Pancreas (tissue), 10 donors: ENCODE measurements at regions of chr11 and their contacts with region 1.

Region 1: GRCh38 chr11:58675334-58676155 is 53.1 kb downstream of the CNTF start:
- DNase-seq: peak; percentile 74 to 95 (median 86)
- ATAC-seq: peak; percentile 91 to 95 (median 94)
- H3K4me3 ChIP-seq: no peak overlapping the region
- H3K27ac ChIP-seq: no peak overlapping the region
- H3K4me1 ChIP-seq: peaks cover 0 to 14% (median 11%) of the 10 kb centered on the region in 3 donors
- H3K27me3 ChIP-seq: no peaks in the 10 kb centered on the region
- CTCF ChIP-seq: peak; percentile 87 to 96 (median 90)

Region 2: DNA sequence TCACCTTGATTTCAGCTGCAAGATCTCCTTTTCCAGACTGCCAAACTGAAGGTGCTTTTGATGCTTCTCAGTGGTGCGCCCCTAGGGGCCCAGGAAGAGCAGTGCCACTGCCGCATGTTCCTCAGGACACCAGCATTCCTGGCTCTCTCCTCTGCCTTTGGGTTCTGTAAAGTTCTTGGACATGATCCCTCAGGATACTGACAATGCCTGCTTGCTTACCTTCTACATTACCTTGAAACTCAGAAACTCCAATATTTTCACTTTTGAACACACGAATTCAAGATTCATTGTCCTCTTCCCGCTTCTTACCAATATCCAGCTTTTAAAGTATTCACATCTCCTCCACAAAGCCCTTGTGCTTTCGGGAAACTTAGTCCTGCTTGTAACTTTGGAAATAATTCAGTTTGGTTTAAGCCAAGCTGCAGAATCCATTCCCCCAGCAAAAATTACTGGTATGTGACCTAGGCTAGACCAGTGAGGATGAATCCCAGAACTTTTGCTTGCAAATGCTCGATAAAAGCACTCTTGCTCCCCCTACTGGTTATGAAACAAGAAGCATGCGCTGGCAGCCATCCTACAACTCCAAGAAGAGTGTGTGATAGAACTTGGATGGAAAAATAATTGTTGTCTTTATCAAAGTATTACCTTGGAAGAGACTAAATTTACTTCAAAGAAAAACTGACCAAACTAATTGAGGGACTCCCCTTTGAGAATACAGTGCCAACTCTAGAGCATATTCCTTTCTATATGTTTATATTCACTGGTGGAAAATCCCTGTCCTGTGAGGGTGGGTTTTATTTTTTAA is 151.1 kb before region 1 on chr11:
- intact Hi-C with region 1: no loop called
- DNase-seq: peak; percentile 43 to 75 (median 55)
- ATAC-seq: peak; percentile 90 to 98 (median 96)
- H3K4me3 ChIP-seq: peak overlapping the region in 1 of 4 donors; percentile 13
- H3K27ac ChIP-seq: no peak overlapping the region
- H3K4me1 ChIP-seq: peaks cover 0 to 9% (median 7%) of the 10 kb centered on the region in 3 donors
- H3K27me3 ChIP-seq: no peaks in the 10 kb centered on the region
- CTCF ChIP-seq: peak; percentile 37 to 78 (median 56)

Region 3: DNA sequence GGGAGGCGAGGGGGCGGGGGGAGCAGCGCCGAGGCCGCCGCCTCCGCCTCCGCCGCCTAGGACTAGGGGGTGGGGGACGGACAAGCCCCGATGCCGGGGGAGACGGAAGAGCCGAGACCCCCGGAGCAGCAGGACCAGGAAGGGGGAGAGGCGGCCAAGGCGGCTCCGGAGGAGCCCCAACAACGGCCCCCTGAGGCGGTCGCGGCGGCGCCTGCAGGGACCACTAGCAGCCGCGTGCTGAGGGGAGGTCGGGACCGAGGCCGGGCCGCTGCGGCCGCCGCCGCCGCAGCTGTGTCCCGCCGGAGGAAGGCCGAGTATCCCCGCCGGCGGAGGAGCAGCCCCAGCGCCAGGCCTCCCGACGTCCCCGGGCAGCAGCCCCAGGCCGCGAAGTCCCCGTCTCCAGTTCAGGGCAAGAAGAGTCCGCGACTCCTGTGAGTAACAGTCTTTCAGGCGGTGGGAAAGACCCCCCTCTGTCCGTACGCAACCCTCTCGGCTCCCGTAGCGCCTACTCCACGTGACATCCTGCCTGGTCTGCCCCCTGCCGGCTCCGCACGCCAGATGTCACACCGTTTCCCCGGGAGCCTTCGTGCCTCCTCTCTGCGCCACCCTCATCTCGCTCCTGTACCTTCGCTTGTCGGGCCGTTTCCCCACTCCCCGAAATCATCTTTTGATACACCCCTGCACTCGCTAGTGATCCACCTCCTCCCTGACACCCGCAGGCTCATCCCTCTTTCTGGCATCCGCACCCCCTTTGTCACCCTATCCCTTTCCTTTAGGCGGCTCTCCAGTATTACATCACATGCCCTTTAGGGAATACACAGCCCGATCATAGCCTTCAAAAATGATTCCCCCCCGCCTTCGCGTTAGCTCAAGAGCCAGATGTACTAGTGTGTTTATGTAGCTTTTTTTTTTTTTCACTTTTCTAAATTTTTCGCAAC is 96.1 kb before region 1 on chr11:
- intact Hi-C with region 1: loop called in 1 of 3 experiments (anchors 10 kb)
- DNase-seq: peak; percentile 88 to 94 (median 91)
- ATAC-seq: peak; percentile 62 to 75 (median 72)
- H3K4me3 ChIP-seq: peak overlapping the region; percentile 90 to 96 (median 92)
- H3K27ac ChIP-seq: peak overlapping the region; percentile 95 to 100 (median 98)
- H3K4me1 ChIP-seq: peaks cover 35 to 50% (median 44%) of the 10 kb centered on the region in 3 donors
- H3K27me3 ChIP-seq: no peaks in the 10 kb centered on the region
- CTCF ChIP-seq: peak; percentile 53 to 65 (median 62)

Region 4: DNA sequence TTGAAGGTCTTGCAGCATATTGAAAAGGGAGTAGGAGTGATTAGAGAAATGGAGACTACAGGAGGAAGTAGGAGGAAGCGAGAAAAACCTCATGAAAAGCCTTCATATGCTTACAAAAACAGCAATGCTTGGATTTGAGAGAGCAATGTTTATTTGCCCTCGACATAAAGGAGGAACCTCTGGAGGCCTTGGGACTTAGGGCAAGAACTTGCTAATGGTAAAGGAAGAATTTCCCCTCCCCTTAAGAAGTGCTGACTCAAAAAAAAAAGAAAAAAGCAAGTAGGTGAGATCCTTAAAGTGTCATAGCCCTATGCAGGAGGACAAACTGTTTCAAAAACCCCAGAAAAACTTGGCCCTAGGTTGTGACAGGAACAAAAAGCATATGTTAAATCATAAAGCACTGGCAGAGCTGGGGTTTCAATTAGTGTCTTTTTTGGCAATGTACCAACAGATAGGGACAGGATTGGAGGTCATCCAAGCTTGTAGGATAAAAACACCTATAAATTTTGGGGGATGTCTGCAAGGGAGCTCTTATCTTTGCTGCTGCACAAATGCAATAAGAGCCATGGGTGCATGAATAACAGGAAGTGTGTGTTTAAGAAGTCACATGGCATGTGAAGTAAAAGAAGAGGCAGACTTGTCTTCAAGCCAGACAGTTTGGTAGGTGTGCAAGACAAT is 51.3 kb after region 1 on chr11:
- intact Hi-C with region 1: no loop called
- DNase-seq: no peak
- ATAC-seq: peak in 1 of 4 donors; percentile 50
- H3K4me3 ChIP-seq: no peak overlapping the region
- H3K27ac ChIP-seq: no peak overlapping the region
- H3K4me1 ChIP-seq: no peaks in the 10 kb centered on the region
- H3K27me3 ChIP-seq: no peaks in the 10 kb centered on the region
- CTCF ChIP-seq: no peak